ENCODE measurements at regions of chr2 and their contacts with region 1.

Region 1: GRCh38 chr2:131349021-131349420 is 14.9 kb downstream of the RAB6D start:
- DNase-seq: no peak
- H3K4me3 ChIP-seq: no peak overlapping the region
- H3K27ac ChIP-seq: no peak overlapping the region
- H3K4me1 ChIP-seq: no peaks in the 10 kb centered on the region
- H3K27me3 ChIP-seq: no peaks in the 10 kb centered on the region
- CTCF ChIP-seq: no peak
- EP300 ChIP-seq: no peak
- POLR2A ChIP-seq: no peak

Region 2: GRCh38 chr2:131154071-131154531 is 194.9 kb before region 1 on chr2:
- in situ Hi-C with region 1: loop called in 1 of 4 experiments (anchors 25 kb)
- intact Hi-C with region 1: no loop called
- DNase-seq: peak; percentile 54
- H3K4me3 ChIP-seq: no peak overlapping the region
- H3K27ac ChIP-seq: no peak overlapping the region
- H3K4me1 ChIP-seq: no peaks in the 10 kb centered on the region
- H3K27me3 ChIP-seq: no peaks in the 10 kb centered on the region
- CTCF ChIP-seq: peak; percentile 82 to 89 (median 82)
- EP300 ChIP-seq: no peak
- POLR2A ChIP-seq: no peak

Region 3: GRCh38 chr2:131322209-131322608 is 26.8 kb before region 1 on chr2:
- in situ Hi-C with region 1: no loop called
- intact Hi-C with region 1: no loop called
- DNase-seq: no peak
- H3K4me3 ChIP-seq: no peak overlapping the region
- H3K27ac ChIP-seq: no peak overlapping the region
- H3K4me1 ChIP-seq: no peaks in the 10 kb centered on the region
- H3K27me3 ChIP-seq: no peaks in the 10 kb centered on the region
- CTCF ChIP-seq: no peak
- EP300 ChIP-seq: no peak
- POLR2A ChIP-seq: no peak

Region 4: DNA sequence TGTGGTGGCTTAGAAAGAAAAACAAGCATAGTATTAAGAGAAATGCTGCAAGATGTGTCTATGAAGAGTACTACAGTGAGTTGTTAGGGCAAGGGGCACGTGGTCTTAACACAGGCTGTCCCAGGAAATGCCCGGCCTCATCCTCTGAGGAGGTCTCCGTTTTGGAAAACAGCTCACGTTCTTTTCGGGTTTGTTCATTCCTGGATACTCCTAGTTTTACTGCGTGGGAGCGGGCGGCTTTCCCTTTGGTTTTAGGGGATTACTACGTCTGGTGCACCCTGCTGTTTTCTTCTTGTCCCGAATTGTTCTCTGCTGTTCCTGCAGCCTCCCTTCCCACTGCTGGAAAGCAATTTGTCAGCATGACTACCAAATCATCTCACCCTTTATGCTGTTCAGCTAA is 70.4 kb after region 1 on chr2:
- in situ Hi-C with region 1: no loop called
- intact Hi-C with region 1: no loop called
- DNase-seq: no peak
- H3K4me3 ChIP-seq: no peak overlapping the region
- H3K27ac ChIP-seq: no peak overlapping the region
- H3K4me1 ChIP-seq: no peaks in the 10 kb centered on the region
- H3K27me3 ChIP-seq: peaks cover 27% of the 10 kb centered on the region
- CTCF ChIP-seq: no peak
- EP300 ChIP-seq: no peak
- POLR2A ChIP-seq: no peak